Left cardiac atrium (tissue), 4 donors: ENCODE measurements at regions of chr2 and their contacts with region 1.

Region 1: GRCh38 chr2:10659898-10660568 is 29.7 kb downstream of the NOL10 start:
- DNase-seq: peak; percentile 65
- ATAC-seq: peak; percentile 55 to 91

Region 2: DNA sequence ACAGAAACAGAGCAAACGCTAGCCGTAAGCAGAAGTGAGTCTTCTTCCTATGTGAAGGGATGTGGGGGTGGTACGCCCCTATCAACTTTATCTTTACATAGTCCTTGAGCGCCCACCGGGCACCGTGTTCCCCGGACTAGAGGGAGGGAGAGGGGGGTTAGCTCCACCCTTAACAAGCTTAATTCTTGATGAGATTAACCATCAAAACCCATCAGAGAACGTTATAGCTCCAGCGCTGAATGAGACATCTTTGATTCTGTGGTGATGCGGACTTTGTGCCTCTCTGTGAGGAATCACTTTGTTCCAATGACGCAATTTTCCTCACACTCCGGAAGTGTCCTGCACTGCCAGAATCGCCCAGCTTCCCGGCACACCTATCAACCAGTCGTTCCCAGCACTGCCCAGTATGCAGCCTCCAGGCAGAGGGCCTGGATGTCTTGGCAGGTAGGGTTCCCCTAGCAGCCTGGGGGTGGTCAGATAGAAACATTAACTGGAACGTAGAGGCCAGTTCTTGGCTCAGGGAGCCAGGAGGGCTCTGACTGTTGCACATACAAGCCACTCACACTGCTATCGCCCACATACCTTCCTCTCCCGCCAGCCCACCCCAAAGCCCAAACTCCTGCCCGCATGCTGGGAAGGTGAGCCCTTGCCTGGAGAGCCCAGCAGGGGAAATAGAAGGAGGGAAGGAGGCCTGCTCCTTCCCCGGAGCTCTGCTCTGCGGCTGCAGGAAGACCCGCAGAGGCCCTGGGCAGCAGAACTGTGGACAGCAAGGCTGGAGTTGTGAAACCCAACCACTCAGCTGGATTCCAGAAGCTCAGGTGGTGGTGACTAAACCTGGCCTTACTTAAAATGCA is 210.0 kb before region 1 on chr2:
- intact Hi-C with region 1: loop called (anchors 5 to 10 kb)
- DNase-seq: no peak
- ATAC-seq: no peak

Region 3: GRCh38 chr2:10457911-10458604 is 202.0 kb before region 1 on chr2:
- intact Hi-C with region 1: loop called (anchors 5 to 10 kb)
- DNase-seq: no peak
- ATAC-seq: peak in 1 of 2 donors; percentile 46